Gastrocnemius medialis (tissue), 4 donors: ENCODE measurements at regions of chr1 and their contacts with region 1.

Region 1: DNA sequence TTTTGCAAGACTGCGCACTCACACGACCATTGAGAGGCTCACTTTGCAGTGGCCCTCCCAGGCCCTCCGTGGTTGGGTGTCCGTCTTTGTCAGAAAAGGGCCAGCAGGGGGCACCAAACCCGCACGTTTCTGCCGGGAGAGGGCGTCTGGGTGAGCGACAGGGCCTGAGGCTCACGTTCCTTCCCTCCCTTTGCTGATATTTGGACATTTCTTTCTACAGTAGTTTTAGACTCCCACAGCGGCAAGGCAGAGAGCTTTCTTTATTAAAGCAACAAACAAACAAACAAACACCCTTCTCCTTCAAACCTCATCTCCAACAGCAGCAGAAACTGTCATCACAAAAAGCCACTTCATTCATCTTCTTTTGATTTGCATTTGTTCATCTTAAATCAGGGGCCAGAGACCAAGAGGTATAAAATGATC is 79.2 kb upstream of the WDR26 start:
- DNase-seq: peak; percentile 67 to 75
- ATAC-seq: peak; percentile 89 to 95
- H3K4me3 ChIP-seq: no peak overlapping the region
- H3K27ac ChIP-seq: no peak overlapping the region
- H3K4me1 ChIP-seq: peaks cover 0 to 3% of the 10 kb centered on the region in 2 donors
- H3K27me3 ChIP-seq: no peaks in the 10 kb centered on the region
- CTCF ChIP-seq: peak; percentile 86 to 90 (median 89)
- POLR2A ChIP-seq: no peak

Region 2: GRCh38 chr1:224637515-224637914 is 123.7 kb after region 1 on chr1:
- in situ Hi-C with region 1: loop called in 2 of 4 experiments (anchors 5 to 10 kb)
- intact Hi-C with region 1: loop called (anchors 1 kb)
- DNase-seq: peak; percentile 17 to 42
- ATAC-seq: peak; percentile 76
- H3K4me3 ChIP-seq: no peak overlapping the region
- H3K27ac ChIP-seq: no peak overlapping the region
- H3K4me1 ChIP-seq: peaks cover 0 to 3% of the 10 kb centered on the region in 2 donors
- H3K27me3 ChIP-seq: no peaks in the 10 kb centered on the region
- CTCF ChIP-seq: no peak
- POLR2A ChIP-seq: no peak

Region 3: DNA sequence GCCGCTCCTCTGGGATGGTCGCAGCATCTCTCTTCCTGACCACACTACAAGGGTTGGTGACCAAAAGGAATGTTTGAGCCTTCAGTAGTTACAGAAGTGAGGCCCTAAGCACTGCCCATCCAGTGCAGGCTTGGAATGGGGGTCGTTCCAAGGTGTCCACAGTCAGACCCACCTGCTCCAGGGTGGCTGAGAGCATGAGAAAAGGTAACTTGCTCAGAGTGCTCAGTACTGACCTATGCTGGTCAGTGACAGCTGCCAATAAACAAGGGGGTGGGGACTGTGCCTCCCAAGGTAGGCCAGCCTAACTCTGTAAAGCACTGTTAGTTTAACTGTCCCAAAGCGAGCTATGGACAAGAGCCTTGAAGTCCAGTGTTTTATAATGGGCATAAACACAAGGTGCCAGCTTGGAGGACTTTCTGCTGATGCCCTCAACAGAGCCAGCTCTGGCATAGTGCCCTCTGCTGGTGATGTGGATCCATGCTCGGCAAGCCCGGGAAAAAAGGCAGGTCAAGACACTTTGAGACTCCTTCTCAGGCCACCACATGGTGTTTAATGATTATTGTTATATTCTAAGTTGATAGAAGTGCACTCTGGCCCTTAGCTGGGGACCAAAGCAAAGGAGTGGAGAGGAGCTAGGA is 337.5 kb after region 1 on chr1:
- in situ Hi-C with region 1: loop called (anchors 5 to 10 kb)
- intact Hi-C with region 1: loop called (anchors 1 kb)
- DNase-seq: peak; percentile 9 to 24
- ATAC-seq: peak in 1 of 2 donors; percentile 58
- H3K4me3 ChIP-seq: no peak overlapping the region
- H3K27ac ChIP-seq: no peak overlapping the region
- H3K4me1 ChIP-seq: no peaks in the 10 kb centered on the region
- H3K27me3 ChIP-seq: no peaks in the 10 kb centered on the region
- CTCF ChIP-seq: peak; percentile 9 to 54 (median 38)
- POLR2A ChIP-seq: no peak

Region 4: DNA sequence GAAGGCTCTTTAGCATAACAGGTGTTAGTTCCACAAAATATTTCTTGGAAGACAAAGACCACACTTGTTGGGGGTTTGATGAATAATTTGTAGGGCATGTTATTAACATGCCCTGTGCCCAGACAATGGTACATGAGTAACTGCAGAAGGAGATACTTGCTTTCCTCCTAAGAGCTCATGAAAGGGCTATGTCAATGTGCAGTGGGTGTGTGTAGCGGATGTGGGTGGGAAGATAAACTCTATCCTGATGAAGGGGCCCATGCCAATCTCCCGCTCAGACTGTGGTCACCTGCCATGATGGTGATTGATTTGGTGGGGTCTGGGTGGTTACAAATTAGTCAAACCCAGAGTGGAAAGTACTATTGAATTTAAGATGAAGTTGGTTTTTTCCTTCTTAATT is 345.9 kb after region 1 on chr1:
- in situ Hi-C with region 1: loop called (anchors 5 to 10 kb)
- intact Hi-C with region 1: loop called (anchors 1 kb)
- DNase-seq: no peak
- ATAC-seq: no peak
- H3K4me3 ChIP-seq: no peak overlapping the region
- H3K27ac ChIP-seq: no peak overlapping the region
- H3K4me1 ChIP-seq: no peaks in the 10 kb centered on the region
- H3K27me3 ChIP-seq: peaks cover 0 to under 1% (median 0%) of the 10 kb centered on the region in 3 donors
- CTCF ChIP-seq: no peak
- POLR2A ChIP-seq: no peak

Region 5: DNA sequence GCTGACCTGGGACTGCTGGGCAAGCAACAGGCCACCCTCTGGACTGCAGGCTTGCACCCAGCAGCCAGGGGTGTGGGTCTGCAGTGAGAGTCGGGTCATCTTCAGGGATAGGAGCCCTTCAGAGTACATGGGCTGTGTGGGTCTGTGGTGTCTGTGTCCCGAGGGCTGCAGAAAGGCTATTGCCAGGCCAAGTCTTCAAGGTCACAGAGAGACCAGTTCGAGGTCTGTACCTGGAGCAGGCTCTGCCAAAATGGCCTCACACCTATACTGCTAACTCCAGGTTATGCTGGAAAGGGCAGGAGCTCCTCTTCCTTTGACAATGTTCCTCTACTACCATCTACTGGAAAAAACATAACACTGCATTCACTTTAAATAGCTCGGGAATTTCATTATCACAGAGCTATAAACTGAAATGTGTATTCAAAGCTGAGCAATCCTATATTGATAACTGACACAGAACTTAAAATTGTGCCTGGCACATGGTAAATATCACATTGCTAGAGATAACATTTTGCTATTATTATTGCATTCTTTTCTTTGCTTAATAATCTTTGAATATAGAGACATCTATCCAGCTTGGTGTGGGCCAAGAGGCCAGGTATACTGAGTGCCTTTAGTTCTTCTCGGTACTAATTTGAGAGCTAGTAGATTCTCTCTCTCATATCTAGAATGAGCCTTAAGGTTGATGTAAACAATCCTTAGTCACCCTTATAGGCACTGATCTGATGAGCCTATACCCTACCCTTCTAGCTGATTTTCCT is 408.8 kb after region 1 on chr1:
- in situ Hi-C with region 1: loop called in 2 of 4 experiments (anchors 5 to 10 kb)
- intact Hi-C with region 1: loop called (anchors 1 kb)
- DNase-seq: no peak
- ATAC-seq: peak; percentile 64 to 81
- H3K4me3 ChIP-seq: no peak overlapping the region
- H3K27ac ChIP-seq: no peak overlapping the region
- H3K4me1 ChIP-seq: no peaks in the 10 kb centered on the region
- H3K27me3 ChIP-seq: no peaks in the 10 kb centered on the region
- CTCF ChIP-seq: peak; percentile 30 to 66 (median 53)
- POLR2A ChIP-seq: no peak

Region 6: GRCh38 chr1:224929335-224930237 is 415.8 kb after region 1 on chr1 and contains the start of gene DNAH14:
- in situ Hi-C with region 1: loop called in 2 of 4 experiments (anchors 5 to 10 kb)
- intact Hi-C with region 1: no loop called
- DNase-seq: no peak
- ATAC-seq: no peak
- H3K4me3 ChIP-seq: peak within 1 kb of the TSS; percentile 24 to 37 (median 33)
- H3K27ac ChIP-seq: no peak within 1 kb of the TSS
- H3K4me1 ChIP-seq: no peaks in the 10 kb centered on the region
- H3K27me3 ChIP-seq: peaks cover 16 to 48% (median 19%) of the 10 kb centered on the region in 3 donors
- CTCF ChIP-seq: no peak
- POLR2A ChIP-seq: no peak
- total RNA-seq, gene DNAH14: 0.15 to 0.55 TPM in 2 of 4 donors, not detected in the others